Adrenal gland (tissue), 19 donors: ENCODE measurements at regions of chr6 and their contacts with region 1.

Region 1: DNA sequence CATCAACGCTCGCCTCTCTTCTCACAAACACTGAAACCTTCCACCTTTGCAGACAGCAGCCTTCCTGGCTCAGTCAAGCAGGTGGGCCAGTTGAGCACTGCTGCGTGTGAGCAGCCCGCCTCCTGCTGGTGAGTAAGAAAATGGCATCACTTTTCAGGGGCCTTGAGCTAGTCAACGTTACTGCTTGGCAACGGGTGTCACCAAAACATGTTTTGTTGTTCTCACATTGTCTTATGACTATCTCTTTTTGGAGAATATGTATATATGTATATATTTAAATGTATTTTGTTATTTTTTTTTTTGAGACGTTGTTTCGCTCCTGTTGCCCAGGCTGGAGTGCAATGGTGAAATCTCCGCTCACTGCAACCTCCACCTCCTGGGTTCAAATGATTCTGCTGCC is 97.0 kb upstream of the AGPAT4 start:
- DNase-seq: peak; percentile 41 to 79 (median 51)
- H3K4me3 ChIP-seq: no peak overlapping the region
- H3K27ac ChIP-seq: no peak overlapping the region
- H3K4me1 ChIP-seq: peaks cover 0 to 4% of the 10 kb centered on the region in 2 donors
- H3K27me3 ChIP-seq: no peaks in the 10 kb centered on the region
- CTCF ChIP-seq: peak; percentile 71 to 89 (median 85)
- POLR2A ChIP-seq: no peak

Region 2: DNA sequence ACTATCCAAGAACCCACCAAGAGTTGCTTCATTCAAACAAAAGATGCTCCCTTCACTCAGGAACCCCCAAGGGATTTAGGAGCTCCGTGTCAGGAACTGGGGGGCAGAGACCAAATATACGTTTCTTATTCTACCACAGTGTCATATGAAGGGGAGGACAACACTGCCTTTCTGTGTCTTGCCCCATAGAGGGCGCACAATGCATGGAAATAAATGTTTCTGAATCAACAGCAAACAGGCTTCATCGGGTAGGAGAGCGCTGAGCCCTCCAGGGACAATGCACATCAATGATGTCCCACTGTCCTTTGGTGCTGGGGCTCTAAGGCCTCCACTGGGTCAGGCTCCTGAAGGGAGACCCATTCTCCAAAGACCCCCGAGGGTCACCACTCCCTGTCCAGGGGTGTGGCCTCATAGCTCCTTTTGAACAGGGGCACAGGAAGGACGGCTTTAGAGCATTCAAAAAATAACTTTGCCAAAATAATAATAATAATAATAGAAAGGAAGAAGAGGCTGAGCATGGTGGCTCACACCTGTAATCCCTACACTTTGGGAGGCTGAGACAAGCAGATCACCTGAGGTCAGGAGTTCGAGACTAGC is 637.7 kb before region 1 on chr6:
- intact Hi-C with region 1: loop called in 1 of 2 experiments (anchors 5 kb)
- DNase-seq: peak; percentile 33 to 73 (median 54)
- H3K4me3 ChIP-seq: no peak overlapping the region
- H3K27ac ChIP-seq: no peak overlapping the region
- H3K4me1 ChIP-seq: no peaks in the 10 kb centered on the region
- H3K27me3 ChIP-seq: peaks cover 3% of the 10 kb centered on the region
- CTCF ChIP-seq: peak; percentile 58 to 71 (median 68)
- POLR2A ChIP-seq: no peak

Region 3: GRCh38 chr6:161152907-161153662 is 217.8 kb before region 1 on chr6:
- intact Hi-C with region 1: loop called (anchors 5 kb)
- DNase-seq: peak in 1 of 7 donors; percentile 11
- H3K4me3 ChIP-seq: no peak overlapping the region
- H3K27ac ChIP-seq: no peak overlapping the region
- H3K4me1 ChIP-seq: no peaks in the 10 kb centered on the region
- H3K27me3 ChIP-seq: no peaks in the 10 kb centered on the region
- CTCF ChIP-seq: peak in 4 of 6 experiments; percentile 27 to 51 (median 48)
- POLR2A ChIP-seq: no peak

Region 4: GRCh38 chr6:161292145-161292544 is 78.7 kb before region 1 on chr6:
- intact Hi-C with region 1: no loop called
- DNase-seq: no peak
- H3K4me3 ChIP-seq: no peak overlapping the region
- H3K27ac ChIP-seq: no peak overlapping the region
- H3K4me1 ChIP-seq: no peaks in the 10 kb centered on the region
- H3K27me3 ChIP-seq: no peaks in the 10 kb centered on the region
- CTCF ChIP-seq: no peak
- POLR2A ChIP-seq: no peak